ENCODE measurements at regions of chr17 and their contacts with region 1.

Region 1: DNA sequence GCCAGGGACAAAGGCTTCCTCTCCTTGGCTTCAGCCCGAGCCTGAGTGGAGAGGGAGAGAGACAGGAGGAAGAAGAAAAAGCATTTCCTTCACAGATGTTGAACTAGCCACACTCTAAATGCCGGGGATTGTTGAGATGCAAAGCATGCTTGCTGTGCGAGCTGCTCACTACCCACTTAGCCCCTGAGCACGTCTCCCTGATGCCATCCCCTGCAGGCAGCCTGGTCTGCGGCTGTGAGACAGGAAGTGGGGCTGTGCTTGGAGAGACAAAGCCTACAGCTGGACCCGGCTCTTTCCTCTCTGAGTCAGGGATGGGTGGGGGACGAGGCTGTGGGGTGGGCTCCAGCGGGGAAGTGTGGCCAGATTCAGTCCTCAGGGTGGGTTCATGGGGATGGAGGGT is 13.7 kb downstream of the WNT9B start:
- DNase-seq: no peak
- ATAC-seq: no peak
- H3K4me3 ChIP-seq: no peak overlapping the region
- H3K27ac ChIP-seq: no peak overlapping the region
- H3K4me1 ChIP-seq: peaks cover 5% of the 10 kb centered on the region
- H3K27me3 ChIP-seq: peaks cover 0 to 31% (median 4%) of the 10 kb centered on the region in 3 donors
- CTCF ChIP-seq: no peak

Region 2: GRCh38 chr17:45284176-45285140 is 1580.6 kb before region 1 on chr17:
- intact Hi-C with region 1: no loop called
- DNase-seq: peak; percentile 80 to 93
- ATAC-seq: peak; percentile 71 to 80 (median 76)
- H3K4me3 ChIP-seq: no peak overlapping the region
- H3K27ac ChIP-seq: peak overlapping the region; percentile 96
- H3K4me1 ChIP-seq: peaks cover 78% of the 10 kb centered on the region
- H3K27me3 ChIP-seq: no peaks in the 10 kb centered on the region
- CTCF ChIP-seq: peak; percentile 40

Region 3: GRCh38 chr17:46910179-46910927 is 45.3 kb after region 1 on chr17:
- intact Hi-C with region 1: loop called in 1 of 2 experiments (anchors 2 kb)
- DNase-seq: no peak
- ATAC-seq: no peak
- H3K4me3 ChIP-seq: no peak overlapping the region
- H3K27ac ChIP-seq: no peak overlapping the region
- H3K4me1 ChIP-seq: no peaks in the 10 kb centered on the region
- H3K27me3 ChIP-seq: no peaks in the 10 kb centered on the region
- CTCF ChIP-seq: no peak

Measured in psoas muscle (tissue), 8 donors.